Posterior cingulate gyrus (tissue), 11 donors: ENCODE measurements at regions of chr5 and their contacts with region 1.

Region 1: DNA sequence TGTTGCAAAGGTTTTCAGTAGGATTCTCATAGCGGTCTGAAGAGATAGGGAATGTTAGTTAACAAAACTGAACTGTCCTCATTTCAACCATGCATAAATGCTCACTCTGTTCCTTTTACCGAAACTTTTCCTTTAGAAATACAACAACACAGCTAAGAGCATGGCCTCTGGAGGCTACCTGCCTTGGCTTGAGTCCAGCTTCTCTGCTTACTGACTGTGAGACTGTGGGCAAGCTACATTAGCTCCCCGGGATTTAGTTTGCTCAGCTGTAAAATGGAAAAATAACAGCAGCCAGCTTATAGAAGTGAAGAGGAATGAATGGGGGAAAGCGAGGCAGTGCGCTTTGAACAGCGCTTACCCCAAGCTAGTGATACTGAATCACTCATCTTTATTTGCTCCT is 507.9 kb upstream of the DAP start:
- DNase-seq: no peak

Region 2: DNA sequence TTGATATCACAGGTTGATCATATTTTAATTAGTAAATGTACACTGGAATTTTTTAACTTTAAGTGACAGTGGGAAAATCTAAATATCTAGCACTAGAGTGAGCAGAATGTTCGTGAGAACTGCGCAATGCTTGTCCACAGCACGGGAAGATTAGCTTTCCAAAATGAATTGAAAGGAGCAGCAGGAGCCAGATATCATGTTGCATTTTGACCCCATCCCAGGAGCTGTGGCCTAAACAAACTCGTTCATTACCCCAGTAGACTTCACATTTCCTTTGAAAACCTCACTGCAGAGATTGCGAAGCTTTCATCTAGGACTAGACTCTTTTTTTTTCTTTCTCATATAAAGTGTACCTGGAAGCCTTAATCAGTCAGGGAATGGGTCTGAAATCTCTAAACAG is 109.6 kb after region 1 on chr5:
- intact Hi-C with region 1: no loop called
- DNase-seq: no peak

Region 3: DNA sequence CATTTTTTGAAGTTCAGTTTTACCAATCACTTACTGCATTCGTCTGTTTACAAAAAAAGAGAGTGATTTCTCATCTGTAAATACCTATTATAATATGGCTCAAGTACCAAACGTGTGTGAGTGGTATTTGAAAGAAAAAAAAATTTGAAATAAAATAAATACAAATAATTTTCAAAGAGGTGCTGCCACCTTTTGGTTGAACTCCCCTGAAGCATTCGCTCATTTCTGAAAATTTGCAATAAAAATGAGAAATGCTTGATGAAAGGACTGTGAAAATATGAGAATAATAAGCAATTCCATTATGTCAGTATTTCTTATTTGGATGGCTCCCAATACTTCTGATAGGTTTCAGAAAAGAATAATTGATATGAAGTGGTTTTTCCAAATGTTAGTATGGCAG is 225.4 kb after region 1 on chr5:
- intact Hi-C with region 1: loop called (anchors 5 kb)
- DNase-seq: no peak

Region 4: DNA sequence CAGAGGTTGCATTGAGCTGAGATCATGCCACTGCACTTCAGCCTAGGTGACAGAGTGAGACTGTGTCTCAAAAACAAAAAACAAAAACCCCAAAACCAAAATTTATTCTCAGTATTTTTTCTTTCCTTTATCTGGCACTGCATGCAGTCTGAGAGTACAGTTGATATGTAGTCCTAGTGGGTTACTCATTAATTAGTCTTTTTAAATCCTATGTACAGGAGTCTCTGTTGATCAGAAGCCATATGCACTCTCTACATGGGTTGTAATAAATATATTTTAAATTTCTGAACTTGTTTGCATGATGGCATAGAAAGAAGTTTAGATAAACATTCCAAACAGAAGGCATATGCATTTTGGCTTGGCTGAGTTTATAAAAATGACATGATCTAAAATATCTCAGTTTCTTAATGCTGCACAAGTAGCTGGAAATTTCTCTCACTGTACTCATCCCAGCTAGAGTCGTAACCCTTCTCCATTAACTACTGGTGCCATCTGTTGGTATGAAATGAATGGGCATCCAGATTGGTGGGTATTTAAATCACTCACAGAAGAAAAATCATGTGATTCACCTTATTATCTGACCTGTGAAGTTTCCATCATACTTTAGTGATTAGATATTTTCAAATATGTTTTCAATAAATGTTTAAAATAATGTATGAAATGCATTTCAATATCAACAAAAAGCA is 350.6 kb after region 1 on chr5:
- intact Hi-C with region 1: loop called (anchors 1 kb)
- DNase-seq: no peak